ENCODE measurements at regions of chr11 and their contacts with region 1.

Region 1: GRCh38 chr11:126440792-126441514 is 85.5 kb downstream of the ST3GAL4 start:
- DNase-seq: peak; percentile 80
- H3K4me3 Mint-ChIP-seq: no peak overlapping the region
- H3K27ac Mint-ChIP-seq: no peak overlapping the region
- H3K4me1 Mint-ChIP-seq: peaks cover 5% of the 10 kb centered on the region
- H3K27me3 Mint-ChIP-seq: no peaks in the 10 kb centered on the region
- CTCF ChIP-seq: peak; percentile 95

Region 2: GRCh38 chr11:126268708-126269579 is 172.0 kb before region 1 on chr11 and contains the starts of genes FOXRED1 and SRPRA:
- CTCF ChIA-PET with region 1: no interaction called
- POLR2A ChIA-PET with region 1: no interaction called
- intact Hi-C with region 1: no loop called
- DNase-seq: peak; percentile 99
- H3K4me3 Mint-ChIP-seq: peak within 1 kb of the TSS; percentile 94
- H3K27ac Mint-ChIP-seq: peak within 1 kb of the TSS; percentile 97
- H3K4me1 Mint-ChIP-seq: peaks cover 23% of the 10 kb centered on the region
- H3K27me3 Mint-ChIP-seq: no peaks in the 10 kb centered on the region
- CTCF ChIP-seq: no peak
- total RNA-seq, gene FOXRED1: 28.2 and 37.2 TPM in 2 replicates
- total RNA-seq, gene SRPRA: 176 and 258 TPM in 2 replicates

Region 3: GRCh38 chr11:126416542-126417090 is 24.3 kb before region 1 on chr11:
- CTCF ChIA-PET with region 1: interaction called, 13 read pairs
- POLR2A ChIA-PET with region 1: no interaction called
- intact Hi-C with region 1: no loop called
- DNase-seq: no peak
- H3K4me3 Mint-ChIP-seq: no peak overlapping the region
- H3K27ac Mint-ChIP-seq: peak overlapping the region; percentile 23
- H3K4me1 Mint-ChIP-seq: no peaks in the 10 kb centered on the region
- H3K27me3 Mint-ChIP-seq: no peaks in the 10 kb centered on the region
- CTCF ChIP-seq: no peak

Region 4: GRCh38 chr11:126816645-126817044 is 375.7 kb after region 1 on chr11:
- CTCF ChIA-PET with region 1: no interaction called
- POLR2A ChIA-PET with region 1: no interaction called
- intact Hi-C with region 1: no loop called
- DNase-seq: no peak
- H3K4me3 Mint-ChIP-seq: no peak overlapping the region
- H3K27ac Mint-ChIP-seq: no peak overlapping the region
- H3K4me1 Mint-ChIP-seq: no peaks in the 10 kb centered on the region
- H3K27me3 Mint-ChIP-seq: no peaks in the 10 kb centered on the region
- CTCF ChIP-seq: no peak